Calu3 (cell line): ENCODE measurements at regions of chr4 and their contacts with region 1.

Region 1: DNA sequence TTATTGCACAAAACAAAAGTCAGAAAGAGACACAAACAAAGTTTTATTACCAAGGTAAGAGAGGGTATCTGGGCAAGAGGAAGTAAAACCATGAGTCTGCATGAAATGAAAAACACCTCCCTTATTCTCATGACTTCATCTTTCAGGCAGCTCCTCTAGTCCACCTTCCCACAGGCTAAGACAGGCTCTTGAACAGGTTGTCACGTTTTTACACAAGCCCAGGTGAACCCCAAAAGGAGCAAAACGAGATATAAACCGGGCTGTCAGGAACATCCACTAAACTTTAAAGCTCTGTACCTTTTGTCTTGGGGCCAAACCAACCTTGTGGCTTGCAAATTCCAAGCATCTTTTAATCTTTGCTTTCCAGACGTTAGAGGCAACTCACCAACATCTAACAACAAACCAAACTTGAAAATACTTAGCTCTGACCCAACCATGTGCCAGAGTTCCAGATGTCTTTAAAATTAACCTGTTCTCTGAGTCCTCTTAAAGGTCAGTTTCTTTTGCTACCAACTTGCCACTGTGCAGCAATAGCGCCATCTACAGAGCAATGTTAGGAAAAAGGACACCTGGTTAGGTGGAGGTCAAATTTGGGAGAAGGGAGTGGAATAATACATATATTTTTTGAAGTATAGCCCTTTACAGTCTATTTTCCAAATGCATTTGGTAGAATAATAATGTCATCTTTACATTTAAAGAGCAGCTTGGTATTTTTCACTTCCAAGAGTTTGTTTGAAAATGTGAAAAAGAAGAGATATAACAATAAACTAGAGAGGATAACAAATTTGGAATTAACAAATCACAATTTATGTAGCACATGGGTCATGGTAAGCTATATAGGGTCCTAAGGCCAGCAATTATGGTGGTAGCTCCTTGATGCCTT is 73.1 kb downstream of the QRFPR start:
- DNase-seq: peak; percentile 41
- H3K4me3 Mint-ChIP-seq: no peak overlapping the region
- H3K27ac Mint-ChIP-seq: no peak overlapping the region
- H3K4me1 Mint-ChIP-seq: peaks cover 10% of the 10 kb centered on the region
- H3K27me3 Mint-ChIP-seq: no peaks in the 10 kb centered on the region
- CTCF ChIP-seq: peak; percentile 53

Region 2: GRCh38 chr4:120156120-120156718 is 1151.5 kb before region 1 on chr4:
- CTCF ChIA-PET with region 1: no interaction called
- intact Hi-C with region 1: loop called (anchors 5 kb)
- DNase-seq: peak; percentile 43
- H3K4me3 Mint-ChIP-seq: no peak overlapping the region
- H3K27ac Mint-ChIP-seq: no peak overlapping the region
- H3K4me1 Mint-ChIP-seq: no peaks in the 10 kb centered on the region
- H3K27me3 Mint-ChIP-seq: no peaks in the 10 kb centered on the region
- CTCF ChIP-seq: no peak

Region 3: DNA sequence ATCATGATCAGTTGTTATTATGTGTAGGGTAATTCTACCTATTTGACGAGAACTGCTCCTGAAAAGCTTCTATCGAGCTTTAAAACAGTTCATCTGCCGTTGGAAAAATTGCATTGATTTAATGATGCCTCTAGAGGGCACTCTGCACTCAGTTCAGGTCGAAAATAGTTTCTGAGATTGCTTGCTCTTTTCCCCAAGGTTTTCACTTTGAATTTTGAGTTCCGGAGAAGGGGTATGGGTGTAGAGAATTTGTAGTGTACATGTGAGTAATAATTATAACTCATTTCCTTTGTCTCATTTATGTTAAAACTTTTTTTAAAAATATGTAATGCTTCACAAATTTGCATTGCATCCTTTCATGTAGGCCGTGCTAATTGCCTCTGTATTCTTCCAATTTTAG is 115.2 kb before region 1 on chr4:
- CTCF ChIA-PET with region 1: interaction called, 7 read pairs
- intact Hi-C with region 1: loop called (anchors 1 kb)
- DNase-seq: no peak
- H3K4me3 Mint-ChIP-seq: no peak overlapping the region
- H3K27ac Mint-ChIP-seq: no peak overlapping the region
- H3K4me1 Mint-ChIP-seq: no peaks in the 10 kb centered on the region
- H3K27me3 Mint-ChIP-seq: no peaks in the 10 kb centered on the region
- CTCF ChIP-seq: no peak

Region 4: DNA sequence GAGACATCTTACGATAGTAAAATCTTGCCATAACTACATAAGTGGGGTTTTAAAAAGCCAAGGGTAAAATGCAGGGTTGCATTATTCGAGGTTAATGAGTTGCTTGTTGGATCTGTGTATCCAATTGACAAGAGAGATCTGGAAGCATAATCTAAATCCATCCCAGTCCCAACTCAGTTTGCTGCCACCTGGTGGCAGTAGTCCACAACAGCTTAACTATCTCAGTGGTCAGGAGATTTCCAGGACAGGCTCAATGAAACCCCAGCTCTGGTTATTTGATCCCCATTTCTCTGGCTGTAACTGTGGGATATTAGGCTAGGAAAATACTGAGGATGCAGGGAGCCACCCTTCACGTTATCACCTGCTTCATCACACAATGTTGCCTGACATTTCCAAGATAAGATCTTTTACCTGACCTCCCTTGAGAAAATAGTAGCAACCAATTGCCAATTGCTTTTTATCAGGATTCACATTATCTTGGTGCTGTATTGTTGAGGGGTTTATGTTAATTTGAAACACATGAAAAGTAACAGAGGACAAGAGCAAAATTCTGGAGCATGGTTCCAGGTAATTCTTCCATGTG is 55.4 kb before region 1 on chr4:
- CTCF ChIA-PET with region 1: no interaction called
- intact Hi-C with region 1: loop called (anchors 5 kb)
- DNase-seq: peak; percentile 58
- H3K4me3 Mint-ChIP-seq: no peak overlapping the region
- H3K27ac Mint-ChIP-seq: no peak overlapping the region
- H3K4me1 Mint-ChIP-seq: no peaks in the 10 kb centered on the region
- H3K27me3 Mint-ChIP-seq: no peaks in the 10 kb centered on the region
- CTCF ChIP-seq: peak; percentile 20

Region 5: GRCh38 chr4:121277624-121278023 is 30.1 kb before region 1 on chr4:
- CTCF ChIA-PET with region 1: no interaction called
- intact Hi-C with region 1: loop called (anchors 2 kb)
- DNase-seq: peak; percentile 14
- H3K4me3 Mint-ChIP-seq: no peak overlapping the region
- H3K27ac Mint-ChIP-seq: no peak overlapping the region
- H3K4me1 Mint-ChIP-seq: peaks cover 19% of the 10 kb centered on the region
- H3K27me3 Mint-ChIP-seq: no peaks in the 10 kb centered on the region
- CTCF ChIP-seq: no peak

Region 6: GRCh38 chr4:121321466-121321865 is 13.8 kb after region 1 on chr4:
- CTCF ChIA-PET with region 1: no interaction called
- intact Hi-C with region 1: no loop called
- DNase-seq: no peak
- H3K4me3 Mint-ChIP-seq: no peak overlapping the region
- H3K27ac Mint-ChIP-seq: no peak overlapping the region
- H3K4me1 Mint-ChIP-seq: no peaks in the 10 kb centered on the region
- H3K27me3 Mint-ChIP-seq: no peaks in the 10 kb centered on the region
- CTCF ChIP-seq: no peak